ENCODE measurements at regions of chr2 and their contacts with region 1.

Region 1: GRCh38 chr2:64523666-64524603 is at the start of gene AFTPH:
- DNase-seq: peak; percentile 100
- ATAC-seq: peak; percentile 93
- H3K4me3 Mint-ChIP-seq: peak within 1 kb of the TSS; percentile 99
- H3K27ac Mint-ChIP-seq: peak within 1 kb of the TSS; percentile 99
- H3K4me1 Mint-ChIP-seq: peaks cover 36% of the 10 kb centered on the region
- H3K27me3 Mint-ChIP-seq: peaks cover 6% of the 10 kb centered on the region
- total RNA-seq, gene AFTPH: 26.3 to 27.2 TPM

Region 2: GRCh38 chr2:64359892-64360657 is 163.9 kb before region 1 on chr2:
- CTCF ChIA-PET with region 1: no interaction called
- POLR2A ChIA-PET with region 1: no interaction called
- DNase-seq: no peak
- ATAC-seq: peak; percentile 42
- H3K4me3 Mint-ChIP-seq: no peak overlapping the region
- H3K27ac Mint-ChIP-seq: no peak overlapping the region
- H3K4me1 Mint-ChIP-seq: peaks cover 6% of the 10 kb centered on the region
- H3K27me3 Mint-ChIP-seq: peaks cover 18% of the 10 kb centered on the region

Region 3: GRCh38 chr2:64538764-64539433 is 15.0 kb after region 1 on chr2:
- CTCF ChIA-PET with region 1: interaction called, 21 read pairs
- POLR2A ChIA-PET with region 1: interaction called, 18 read pairs
- DNase-seq: no peak
- ATAC-seq: no peak
- H3K4me3 Mint-ChIP-seq: no peak overlapping the region
- H3K27ac Mint-ChIP-seq: no peak overlapping the region
- H3K4me1 Mint-ChIP-seq: peaks cover 25% of the 10 kb centered on the region
- H3K27me3 Mint-ChIP-seq: no peaks in the 10 kb centered on the region

Region 4: GRCh38 chr2:64562148-64562784 is 38.3 kb after region 1 on chr2:
- CTCF ChIA-PET with region 1: interaction called, 159 read pairs
- POLR2A ChIA-PET with region 1: interaction called, 16 read pairs
- DNase-seq: no peak
- ATAC-seq: peak; percentile 61
- H3K4me3 Mint-ChIP-seq: no peak overlapping the region
- H3K27ac Mint-ChIP-seq: peak overlapping the region; percentile 62
- H3K4me1 Mint-ChIP-seq: peaks cover 34% of the 10 kb centered on the region
- H3K27me3 Mint-ChIP-seq: no peaks in the 10 kb centered on the region

Region 5: GRCh38 chr2:64609227-64609941 is 85.4 kb after region 1 on chr2:
- CTCF ChIA-PET with region 1: interaction called, 20 read pairs
- POLR2A ChIA-PET with region 1: interaction called, 5 read pairs
- DNase-seq: peak; percentile 71
- ATAC-seq: peak; percentile 77
- H3K4me3 Mint-ChIP-seq: peak overlapping the region; percentile 61
- H3K27ac Mint-ChIP-seq: peak overlapping the region; percentile 67
- H3K4me1 Mint-ChIP-seq: peaks cover 25% of the 10 kb centered on the region
- H3K27me3 Mint-ChIP-seq: peaks cover 19% of the 10 kb centered on the region

Region 6: GRCh38 chr2:64653349-64654062 is 129.6 kb after region 1 on chr2 and contains the start of gene SERTAD2:
- CTCF ChIA-PET with region 1: interaction called, 5 read pairs
- POLR2A ChIA-PET with region 1: interaction called, 10 read pairs
- DNase-seq: peak; percentile 87
- ATAC-seq: peak; percentile 85
- H3K4me3 Mint-ChIP-seq: peak within 1 kb of the TSS; percentile 85
- H3K27ac Mint-ChIP-seq: peak within 1 kb of the TSS; percentile 90
- H3K4me1 Mint-ChIP-seq: peaks cover 65% of the 10 kb centered on the region
- H3K27me3 Mint-ChIP-seq: no peaks in the 10 kb centered on the region
- total RNA-seq, gene SERTAD2: 21.4 to 21.8 TPM

Measured in activated CD8-positive, alpha-beta T cell treated with anti-CD3 and anti-CD28 coated beads, Interleukin-2, amount 10 ng/mL, durations not matched to agents 7 days and 5 days (primary cell).